Mammary epithelial cell (primary cell): ENCODE measurements at regions of chr2 and their contacts with region 1.

Region 1: GRCh38 chr2:235050992-235051351 is 99.2 kb downstream of the SH3BP4 start:
- DNase-seq: peak; percentile 83
- H3K4me3 ChIP-seq: no peak overlapping the region
- H3K27ac ChIP-seq: no peak overlapping the region
- H3K4me1 ChIP-seq: peaks cover 8% of the 10 kb centered on the region
- H3K27me3 ChIP-seq: no peaks in the 10 kb centered on the region
- CTCF ChIP-seq: peak in 1 of 2 donors; percentile 9

Region 2: DNA sequence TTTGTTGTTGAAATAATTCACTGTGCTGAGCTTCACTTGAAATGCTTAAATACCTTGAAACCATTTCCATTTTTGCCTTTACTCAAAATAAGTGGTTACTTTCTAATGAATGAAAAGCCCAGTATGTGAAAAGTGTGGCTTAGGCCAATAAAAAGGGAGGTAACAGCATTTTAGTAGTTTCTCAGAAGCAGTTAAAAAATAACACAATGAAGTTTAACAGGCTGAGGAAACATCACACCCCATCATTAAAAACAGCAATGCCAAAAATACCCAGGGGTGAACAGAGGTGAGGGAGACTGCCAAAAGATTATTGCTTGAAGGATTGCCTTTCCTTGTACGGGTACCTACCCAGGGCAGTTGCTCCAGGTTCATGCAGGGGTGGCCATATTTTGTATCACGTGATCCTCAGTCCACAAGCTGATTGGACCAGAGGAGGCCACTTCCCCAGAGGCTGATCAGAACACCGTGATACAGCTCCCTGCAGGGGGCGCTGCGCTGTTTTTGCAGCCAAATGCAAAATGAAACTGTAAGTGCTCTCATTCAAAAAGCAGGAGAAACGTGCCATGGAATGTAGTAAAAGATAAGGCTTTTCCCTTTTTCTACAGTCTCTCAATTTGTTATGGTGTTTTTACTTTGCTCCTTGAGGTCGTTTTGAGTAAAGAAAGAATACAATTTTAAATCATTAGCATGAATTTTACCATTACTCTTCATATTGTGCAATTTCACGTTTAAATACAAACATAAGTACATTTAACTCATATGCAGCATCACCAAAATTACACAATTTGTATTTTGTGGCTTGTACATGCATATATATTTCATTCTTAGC is 169.3 kb before region 1 on chr2:
- CTCF ChIA-PET with region 1: no interaction called
- dilution Hi-C with region 1: no loop called
- in situ Hi-C with region 1: no loop called
- intact Hi-C with region 1: loop called (anchors 10 kb)
- DNase-seq: peak; percentile 70
- H3K4me3 ChIP-seq: no peak overlapping the region
- H3K27ac ChIP-seq: no peak overlapping the region
- H3K4me1 ChIP-seq: peaks cover 22% of the 10 kb centered on the region
- H3K27me3 ChIP-seq: no peaks in the 10 kb centered on the region
- CTCF ChIP-seq: peak; percentile 67 to 79

Region 3: GRCh38 chr2:235773188-235773928 is 722.4 kb after region 1 on chr2:
- CTCF ChIA-PET with region 1: no interaction called
- dilution Hi-C with region 1: no loop called
- in situ Hi-C with region 1: no loop called
- intact Hi-C with region 1: no loop called
- DNase-seq: no peak
- H3K4me3 ChIP-seq: no peak overlapping the region
- H3K27ac ChIP-seq: no peak overlapping the region
- H3K4me1 ChIP-seq: peaks cover 15% of the 10 kb centered on the region
- H3K27me3 ChIP-seq: no peaks in the 10 kb centered on the region
- CTCF ChIP-seq: no peak